Activated T-helper 1 cell treated with anti-CD3 and anti-CD28 coated beads, Interleukin-12 subunit alpha, Interleukin-12 subunit beta, Interleukin-2, Interleukin-4 antibody, amounts not matched to agents 30 ng/mL and 10 ng/mL and 1 ng/mL, durations not matched to agents 14 hours and 24 hours and 36 hours (primary cell): ENCODE measurements at regions of chr21 and their contacts with region 1.

Region 1: GRCh38 chr21:39379986-39380891 is 31.4 kb upstream of the HMGN1 start:
- DNase-seq: peak; percentile 92
- H3K4me3 Mint-ChIP-seq: peak overlapping the region; percentile 94
- H3K27ac Mint-ChIP-seq: peak overlapping the region; percentile 91
- H3K4me1 Mint-ChIP-seq: peaks cover 45% of the 10 kb centered on the region
- H3K27me3 Mint-ChIP-seq: peaks cover 7% of the 10 kb centered on the region

Region 2: GRCh38 chr21:39313571-39314142 is 66.6 kb before region 1 on chr21 and contains the start of gene BRWD1:
- intact Hi-C with region 1: loop called (anchors 2 kb)
- DNase-seq: peak; percentile 75
- H3K4me3 Mint-ChIP-seq: peak within 1 kb of the TSS; percentile 92
- H3K27ac Mint-ChIP-seq: peak within 1 kb of the TSS; percentile 97
- H3K4me1 Mint-ChIP-seq: peaks cover 31% of the 10 kb centered on the region
- H3K27me3 Mint-ChIP-seq: no peaks in the 10 kb centered on the region
- total RNA-seq, gene BRWD1: 34.7 and 38.1 TPM in 2 replicates

Region 3: DNA sequence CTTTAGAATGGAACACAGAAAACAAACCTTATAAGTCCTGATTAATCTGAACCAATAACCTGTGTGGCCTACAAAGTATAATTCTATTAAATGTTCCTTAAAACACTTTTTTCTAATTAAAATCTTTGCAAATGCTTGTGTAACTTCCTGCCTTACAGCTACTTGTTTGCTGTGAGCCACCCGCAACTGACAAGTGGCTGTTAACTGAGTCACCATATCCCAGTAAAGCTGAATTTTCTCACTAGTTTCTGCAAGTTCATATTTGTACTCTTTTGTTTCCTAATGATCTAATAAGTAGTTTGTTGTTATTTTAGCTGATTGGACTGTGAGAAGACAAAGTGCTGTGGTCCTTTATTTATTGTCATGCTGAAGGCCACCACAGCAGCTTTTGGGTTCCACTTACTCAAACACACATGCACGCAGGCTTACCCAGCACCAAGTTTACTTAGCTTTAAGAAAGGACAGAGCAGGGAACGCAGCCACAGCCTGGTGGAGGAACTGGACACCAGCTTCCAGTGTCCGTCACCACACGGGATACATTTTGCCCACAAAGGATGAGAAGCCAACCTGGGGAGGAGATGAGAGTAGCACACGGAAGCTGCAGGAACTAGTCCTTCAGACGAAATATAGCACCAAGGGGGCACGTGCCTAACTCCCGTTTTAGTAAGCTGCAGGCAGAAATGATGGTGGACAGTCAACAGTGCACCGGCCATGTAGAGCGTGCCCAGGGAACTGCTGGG is 17.6 kb after region 1 on chr21:
- intact Hi-C with region 1: no loop called
- DNase-seq: no peak
- H3K4me3 Mint-ChIP-seq: no peak overlapping the region
- H3K27ac Mint-ChIP-seq: no peak overlapping the region
- H3K4me1 Mint-ChIP-seq: no peaks in the 10 kb centered on the region
- H3K27me3 Mint-ChIP-seq: no peaks in the 10 kb centered on the region